GM12878 (cell line): ENCODE measurements at regions of chr12 and their contacts with region 1.

Region 1: DNA sequence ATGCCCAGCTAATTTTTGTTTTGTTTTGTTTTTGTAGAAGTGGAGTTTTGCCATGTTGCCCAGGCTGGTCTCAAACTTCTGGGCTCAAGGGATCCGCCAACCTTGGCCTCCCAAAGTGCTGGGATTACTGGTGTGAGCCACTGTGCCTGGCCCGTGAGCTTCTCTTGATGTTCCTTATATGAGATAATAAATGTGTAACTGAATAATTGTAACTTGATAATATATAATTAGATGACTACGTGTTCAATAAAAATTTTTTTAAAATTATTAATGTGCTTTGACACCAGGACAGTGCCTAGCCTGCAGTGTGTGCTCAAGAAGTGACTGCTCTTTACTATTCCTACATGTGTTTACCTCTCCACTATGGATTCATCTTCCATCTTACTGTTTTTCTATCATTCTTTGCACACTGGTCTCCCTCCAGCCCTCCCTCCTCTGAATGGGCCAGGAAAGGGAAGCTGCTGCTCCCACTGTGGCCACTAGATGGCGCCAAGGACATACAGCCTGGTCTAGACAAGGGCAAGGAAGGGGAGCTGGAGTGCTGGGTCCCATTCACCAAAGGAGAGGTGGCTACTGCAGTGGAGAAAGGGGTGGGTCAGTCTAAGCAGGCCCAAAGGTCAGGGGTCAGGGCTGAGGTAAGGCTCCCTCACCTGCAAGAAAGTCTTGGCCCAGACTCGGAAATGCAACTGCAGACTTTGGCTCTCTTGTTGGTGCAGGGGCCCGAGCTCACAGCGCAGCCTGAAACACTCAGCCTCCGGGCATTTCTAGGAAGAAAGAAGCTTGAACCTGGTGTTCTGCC is 14.7 kb upstream of the ZNF385A start:
- DNase-seq: no peak
- ATAC-seq: peak; percentile 98
- H3K4me3 ChIP-seq: no peak overlapping the region
- H3K27ac ChIP-seq: no peak overlapping the region
- H3K4me1 ChIP-seq: no peaks in the 10 kb centered on the region
- H3K27me3 ChIP-seq: no peaks in the 10 kb centered on the region; a peak in 1 of 4 replicates
- CTCF ChIP-seq: peak; percentile 98 to 99 (median 99)
- EP300 ChIP-seq: no peak
- POLR2A ChIP-seq: no peak
- RAD21 ChIP-seq: peak; percentile 98

Region 2: GRCh38 chr12:54337280-54337842 is 61.8 kb before region 1 on chr12:
- CTCF ChIA-PET with region 1: interaction called, 13 read pairs
- POLR2A ChIA-PET with region 1: interaction called, 4 read pairs
- RAD21 ChIA-PET with region 1: no interaction called
- SMC1A ChIA-PET with region 1: interaction called, 3 read pairs
- in situ Hi-C with region 1: no loop called
- intact Hi-C with region 1: no loop called
- DNase-seq: no peak
- ATAC-seq: no peak
- H3K4me3 ChIP-seq: no peak overlapping the region
- H3K27ac ChIP-seq: no peak overlapping the region
- H3K4me1 ChIP-seq: no peaks in the 10 kb centered on the region
- H3K27me3 ChIP-seq: no peaks in the 10 kb centered on the region
- CTCF ChIP-seq: 0 out of 6 replicates have a peak, but pooled peaks of 1 of the 3 experiments have one; percentile 5
- EP300 ChIP-seq: no peak
- POLR2A ChIP-seq: no peak
- RAD21 ChIP-seq: 0 out of 2 replicates have a peak, but pooled peaks have one; percentile 16

Region 3: DNA sequence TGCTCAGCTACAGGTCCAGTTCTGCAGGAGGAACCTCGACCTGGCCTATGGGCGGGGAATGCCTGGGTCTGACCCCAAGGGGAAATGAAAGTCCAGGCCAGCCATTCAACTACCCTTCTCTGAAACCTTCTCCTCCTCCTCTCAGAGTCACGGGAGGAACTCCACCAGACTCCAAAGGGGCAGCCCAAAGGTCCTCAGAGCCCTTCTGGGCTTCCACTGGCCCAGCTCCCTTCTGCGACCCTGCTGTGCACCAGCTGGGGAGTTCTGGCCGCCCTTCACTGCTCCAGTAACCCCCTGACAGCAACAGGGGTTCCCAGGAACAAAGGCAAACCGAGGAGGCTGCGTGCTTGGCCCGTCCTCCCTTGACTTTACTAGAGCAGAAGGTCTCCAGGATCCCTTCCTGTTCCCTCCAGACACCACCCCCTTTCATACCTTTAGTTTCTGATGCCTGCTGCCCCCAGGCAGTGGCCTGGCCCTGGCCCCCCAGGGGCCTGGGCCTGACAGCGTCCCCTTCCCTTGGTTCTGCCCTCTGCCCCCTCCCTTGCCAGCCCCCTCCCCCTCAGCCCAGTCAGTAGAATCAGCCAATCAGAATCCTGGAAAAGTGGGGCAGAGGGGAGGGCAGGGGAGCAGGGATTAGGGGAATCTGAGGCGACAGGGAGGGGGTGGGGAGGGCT is 13.8 kb before region 1 on chr12:
- CTCF ChIA-PET with region 1: interaction called, 51 read pairs
- POLR2A ChIA-PET with region 1: no interaction called
- RAD21 ChIA-PET with region 1: interaction called, 3 read pairs
- SMC1A ChIA-PET with region 1: interaction called, 9 read pairs
- in situ Hi-C with region 1: no loop called
- intact Hi-C with region 1: no loop called
- DNase-seq: no peak
- ATAC-seq: peak; percentile 86
- H3K4me3 ChIP-seq: peak overlapping the region; percentile 45; the same call in 1 of the 2 replicates
- H3K27ac ChIP-seq: peak overlapping the region; percentile 71
- H3K4me1 ChIP-seq: peaks cover 14% of the 10 kb centered on the region
- H3K27me3 ChIP-seq: no peaks in the 10 kb centered on the region
- CTCF ChIP-seq: no peak
- EP300 ChIP-seq: 0 out of 4 replicates have a peak, but pooled peaks of 1 of the 2 experiments have one; percentile 12
- POLR2A ChIP-seq: no peak
- RAD21 ChIP-seq: no peak

Region 4: GRCh38 chr12:54419088-54419892 is 20.1 kb after region 1 on chr12 and contains the start of gene ITGA5:
- CTCF ChIA-PET with region 1: interaction called, 1,071 read pairs
- POLR2A ChIA-PET with region 1: no interaction called
- RAD21 ChIA-PET with region 1: interaction called, 16 read pairs
- SMC1A ChIA-PET with region 1: interaction called, 26 read pairs
- in situ Hi-C with region 1: no loop called
- intact Hi-C with region 1: no loop called
- DNase-seq: no peak
- ATAC-seq: peak; percentile 16
- H3K4me3 ChIP-seq: peak within 1 kb of the TSS; percentile 32; the same call in 1 of the 2 replicates
- H3K27ac ChIP-seq: no peak within 1 kb of the TSS
- H3K4me1 ChIP-seq: no peaks in the 10 kb centered on the region
- H3K27me3 ChIP-seq: peaks cover 4 to 16% of the 10 kb centered on the region in 2 experiments
- CTCF ChIP-seq: no peak
- EP300 ChIP-seq: no peak
- POLR2A ChIP-seq: no peak
- RAD21 ChIP-seq: no peak
- polyA plus RNA-seq, gene ITGA5: 0.15 to 0.31 TPM

Region 5: GRCh38 chr12:54463034-54463433 is 63.8 kb after region 1 on chr12:
- CTCF ChIA-PET with region 1: interaction called, 17 read pairs
- POLR2A ChIA-PET with region 1: no interaction called
- RAD21 ChIA-PET with region 1: interaction called, 5 read pairs
- SMC1A ChIA-PET with region 1: interaction called, 10 read pairs
- in situ Hi-C with region 1: no loop called
- intact Hi-C with region 1: no loop called
- DNase-seq: no peak
- ATAC-seq: no peak
- H3K4me3 ChIP-seq: no peak overlapping the region
- H3K27ac ChIP-seq: no peak overlapping the region
- H3K4me1 ChIP-seq: peaks cover 3% of the 10 kb centered on the region; the same call in 1 of the 2 replicates
- H3K27me3 ChIP-seq: no peaks in the 10 kb centered on the region
- CTCF ChIP-seq: no peak
- EP300 ChIP-seq: no peak
- POLR2A ChIP-seq: no peak
- RAD21 ChIP-seq: no peak

Region 6: DNA sequence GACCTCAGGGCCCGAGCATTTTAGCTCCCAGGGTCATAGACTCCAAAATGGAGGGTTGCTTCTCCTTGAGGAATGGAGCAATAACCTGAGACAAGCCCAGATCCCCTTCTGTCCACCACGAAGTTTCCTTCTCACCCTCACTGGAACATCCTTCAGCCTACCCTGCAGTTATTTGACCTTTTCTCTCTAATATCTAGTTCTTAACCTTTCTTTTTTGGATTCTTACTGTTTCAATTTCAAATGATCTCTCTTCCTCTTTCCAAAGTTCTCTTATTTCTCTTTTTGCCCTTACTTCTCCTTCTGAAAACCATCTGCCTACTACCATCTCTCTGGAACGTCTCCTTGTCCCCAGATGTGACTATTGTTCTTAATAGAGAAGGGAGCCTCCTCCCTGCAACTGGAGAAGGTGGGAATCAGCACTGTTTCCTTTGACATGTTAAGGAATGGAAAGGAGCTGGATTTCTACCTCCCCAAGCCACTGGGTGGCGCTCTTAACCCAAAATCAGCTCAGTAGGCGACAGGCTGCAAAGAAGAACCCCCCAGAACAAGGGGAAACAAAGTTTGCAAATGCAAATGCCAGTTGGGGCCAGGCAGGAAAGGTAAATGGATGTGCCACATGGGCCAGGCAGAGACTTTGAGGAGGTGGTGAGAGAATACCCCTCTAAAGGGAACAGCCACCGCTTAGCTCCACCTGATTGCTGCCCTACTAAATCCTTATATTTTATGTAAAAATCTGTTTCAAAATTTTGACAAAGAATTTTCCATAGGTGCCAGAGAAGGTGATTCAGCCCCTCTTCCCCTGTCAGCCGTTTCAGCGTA is 127.8 kb after region 1 on chr12:
- CTCF ChIA-PET with region 1: interaction called, 12 read pairs
- POLR2A ChIA-PET with region 1: no interaction called
- RAD21 ChIA-PET with region 1: interaction called, 5 read pairs
- SMC1A ChIA-PET with region 1: interaction called, 8 read pairs
- in situ Hi-C with region 1: no loop called
- intact Hi-C with region 1: no loop called
- DNase-seq: no peak
- ATAC-seq: peak; percentile 58
- H3K4me3 ChIP-seq: no peak overlapping the region
- H3K27ac ChIP-seq: no peak overlapping the region
- H3K4me1 ChIP-seq: no peaks in the 10 kb centered on the region
- H3K27me3 ChIP-seq: no peaks in the 10 kb centered on the region
- CTCF ChIP-seq: peak; percentile 44 to 60 (median 58)
- EP300 ChIP-seq: no peak
- POLR2A ChIP-seq: no peak
- RAD21 ChIP-seq: peak; percentile 28; the same call in 1 of the 2 replicates